Ascending aorta (tissue), 2 donors: ENCODE measurements at regions of chr2 and their contacts with region 1.

Region 1: GRCh38 chr2:169694113-169694903 is at the starts of genes CFAP210 and PHOSPHO2:
- DNase-seq: peak; percentile 99 to 100
- H3K4me3 ChIP-seq: peak within 1 kb of the TSS; percentile 86 to 99
- H3K27ac ChIP-seq: peak within 1 kb of the TSS; percentile 80 to 84
- H3K4me1 ChIP-seq: peaks cover 0 to 4% of the 10 kb centered on the region in 2 donors
- H3K27me3 ChIP-seq: no peaks in the 10 kb centered on the region
- CTCF ChIP-seq: no peak
- total RNA-seq, gene CFAP210: not detected
- total RNA-seq, gene PHOSPHO2: not detected

Region 2: GRCh38 chr2:169584005-169584877 is 110.1 kb before region 1 on chr2 and contains the start of gene PPIG:
- intact Hi-C with region 1: loop called (anchors 1 kb)
- DNase-seq: peak; percentile 62 to 95
- H3K4me3 ChIP-seq: peak within 1 kb of the TSS; percentile 77 to 86
- H3K27ac ChIP-seq: peak within 1 kb of the TSS; percentile 96 to 98
- H3K4me1 ChIP-seq: peaks cover 6 to 22% of the 10 kb centered on the region in 2 donors
- H3K27me3 ChIP-seq: no peaks in the 10 kb centered on the region
- CTCF ChIP-seq: no peak
- total RNA-seq, gene PPIG: 30.2 TPM

Region 3: GRCh38 chr2:169734169-169734847 is 40.0 kb after region 1 on chr2:
- intact Hi-C with region 1: loop called (anchors 1 kb)
- DNase-seq: no peak
- H3K4me3 ChIP-seq: peak overlapping the region; percentile 71 to 94
- H3K27ac ChIP-seq: no peak overlapping the region
- H3K4me1 ChIP-seq: peaks cover 0 to 4% of the 10 kb centered on the region in 2 donors
- H3K27me3 ChIP-seq: no peaks in the 10 kb centered on the region
- CTCF ChIP-seq: no peak

Region 4: GRCh38 chr2:169798718-169799592 is 104.6 kb after region 1 on chr2 and contains the start of gene SSB:
- intact Hi-C with region 1: loop called (anchors 2 kb)
- DNase-seq: peak; percentile 47 to 95
- H3K4me3 ChIP-seq: peak within 1 kb of the TSS; percentile 56 to 81
- H3K27ac ChIP-seq: peak within 1 kb of the TSS; percentile 67 to 82
- H3K4me1 ChIP-seq: peaks cover 0 to 17% of the 10 kb centered on the region in 2 donors
- H3K27me3 ChIP-seq: no peaks in the 10 kb centered on the region
- CTCF ChIP-seq: no peak
- total RNA-seq, gene SSB: 42.6 TPM